Left cardiac atrium (tissue), 4 donors: ENCODE measurements at regions of chr10 and their contacts with region 1.

Region 1: GRCh38 chr10:29535012-29535777 is 99.6 kb downstream of the SVIL start:
- DNase-seq: peak; percentile 70
- ATAC-seq: peak; percentile 62 to 83

Region 2: GRCh38 chr10:29585488-29585980 is 50.3 kb after region 1 on chr10:
- intact Hi-C with region 1: loop called in 1 of 2 experiments (anchors 10 kb)
- DNase-seq: peak; percentile 50
- ATAC-seq: peak; percentile 33 to 39

Region 3: DNA sequence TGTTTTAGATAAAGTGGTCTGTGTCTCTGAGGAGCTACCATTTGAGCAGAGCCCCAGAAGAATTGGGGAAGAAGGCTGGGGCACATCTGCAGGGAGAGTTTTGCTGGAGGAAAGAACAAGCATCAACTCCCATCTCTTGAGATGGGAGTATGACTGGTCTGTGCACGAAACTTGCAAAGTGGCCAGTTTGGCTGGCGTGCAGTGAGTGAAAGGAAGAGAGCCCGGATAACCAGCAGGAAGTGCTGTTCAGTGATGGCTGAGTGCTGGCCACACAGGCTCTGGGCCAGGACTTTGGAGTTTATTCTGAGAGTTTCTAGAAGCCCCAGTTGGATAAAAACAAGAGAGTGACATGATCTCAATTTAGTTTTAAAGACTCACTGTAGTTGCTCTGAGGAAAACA is 134.0 kb after region 1 on chr10:
- intact Hi-C with region 1: no loop called
- DNase-seq: peak; percentile 71
- ATAC-seq: peak; percentile 91 to 94